Activated T-helper 2 cell treated with anti-CD3 and anti-CD28 coated beads, Interferon-gamma antibody, Interleukin-2, Interleukin-4, amounts not matched to agents 10 μg/mL and 5 μg/mL and 100 μg/mL, durations not matched to agents 14 hours and 24 hours and 36 hours (primary cell): ENCODE measurements at regions of chr1 and their contacts with region 1.

Region 1: DNA sequence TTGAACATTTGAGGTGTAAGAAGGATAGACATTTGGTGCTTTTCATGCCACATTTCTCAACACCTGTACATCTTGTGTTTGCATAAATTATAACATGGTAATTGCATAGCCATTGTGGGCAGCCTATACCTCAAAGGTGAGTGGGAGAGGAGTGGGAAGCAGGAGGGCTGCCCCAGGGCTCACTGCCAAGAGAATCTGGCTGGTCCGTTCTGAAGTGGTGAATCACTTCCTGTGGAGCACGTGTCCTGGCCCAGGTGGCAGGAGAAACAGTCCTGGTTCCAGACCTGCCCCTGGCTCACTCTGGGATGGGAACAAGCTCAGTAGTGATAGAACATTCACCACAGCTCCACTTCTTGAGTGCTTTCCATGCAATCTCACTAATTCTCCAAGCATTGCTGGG is 11.6 kb upstream of the OLFML2B start:
- DNase-seq: no peak
- H3K4me3 Mint-ChIP-seq: no peak overlapping the region
- H3K27ac Mint-ChIP-seq: no peak overlapping the region
- H3K4me1 Mint-ChIP-seq: peaks cover 5% of the 10 kb centered on the region
- H3K27me3 Mint-ChIP-seq: peaks cover 18% of the 10 kb centered on the region

Region 2: DNA sequence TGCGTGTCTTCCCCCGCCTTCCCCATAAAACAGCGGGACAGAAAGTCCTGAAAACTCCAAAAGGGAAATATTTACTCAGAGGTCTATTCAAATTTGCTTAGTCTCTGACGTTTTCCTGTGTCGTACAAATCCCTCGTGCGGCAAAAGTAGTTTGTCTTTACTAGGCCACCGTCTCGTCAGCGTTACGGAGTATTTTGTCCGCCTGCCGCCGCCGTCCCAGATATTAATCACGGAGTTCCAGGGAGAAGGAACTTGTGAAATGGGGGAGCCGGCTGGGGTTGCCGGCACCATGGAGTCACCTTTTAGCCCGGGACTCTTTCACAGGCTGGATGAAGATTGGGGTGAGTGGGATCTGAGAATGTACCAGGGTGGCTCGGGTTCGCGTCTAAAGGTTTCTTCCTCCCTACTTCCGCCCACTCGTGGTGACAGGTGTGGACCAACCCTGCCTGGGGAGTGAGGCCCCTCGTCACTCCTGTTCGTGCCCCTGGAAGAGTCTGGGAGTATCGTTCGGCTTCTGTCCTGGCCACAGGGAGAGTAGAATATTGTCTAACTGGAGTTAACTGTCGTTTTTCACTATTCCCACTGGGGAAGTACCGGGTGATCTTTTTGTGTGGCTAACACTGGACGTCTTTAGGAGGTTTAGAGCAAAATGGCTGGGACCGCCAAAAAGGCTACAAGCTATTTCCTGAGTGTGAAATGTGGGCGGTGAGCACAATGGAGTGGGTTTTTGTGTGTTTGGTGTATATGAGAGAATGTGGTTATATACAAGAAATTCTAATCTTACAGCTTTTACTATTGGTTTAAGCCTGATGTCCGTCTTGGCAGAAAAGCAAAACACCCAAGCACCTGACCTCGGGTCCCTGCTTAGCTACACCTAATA is 268.9 kb before region 1 on chr1 and contains the start of gene ATF6:
- intact Hi-C with region 1: loop called (anchors 10 kb)
- DNase-seq: peak; percentile 77
- H3K4me3 Mint-ChIP-seq: peak within 1 kb of the TSS; percentile 97
- H3K27ac Mint-ChIP-seq: peak within 1 kb of the TSS; percentile 96
- H3K4me1 Mint-ChIP-seq: peaks cover 40% of the 10 kb centered on the region
- H3K27me3 Mint-ChIP-seq: no peaks in the 10 kb centered on the region
- total RNA-seq, gene ATF6: 29.6 and 30.4 TPM in 2 replicates

Region 3: GRCh38 chr1:161989108-161989507 is 46.1 kb before region 1 on chr1:
- intact Hi-C with region 1: no loop called
- DNase-seq: no peak
- H3K4me3 Mint-ChIP-seq: no peak overlapping the region
- H3K27ac Mint-ChIP-seq: no peak overlapping the region
- H3K4me1 Mint-ChIP-seq: no peaks in the 10 kb centered on the region
- H3K27me3 Mint-ChIP-seq: peaks cover 8% of the 10 kb centered on the region

Region 4: GRCh38 chr1:162381383-162381782 is 346.1 kb after region 1 on chr1 and contains the start of gene C1orf226:
- intact Hi-C with region 1: no loop called
- DNase-seq: no peak
- H3K4me3 Mint-ChIP-seq: no peak within 1 kb of the TSS
- H3K27ac Mint-ChIP-seq: no peak within 1 kb of the TSS
- H3K4me1 Mint-ChIP-seq: no peaks in the 10 kb centered on the region
- H3K27me3 Mint-ChIP-seq: peaks cover 2% of the 10 kb centered on the region
- total RNA-seq, gene C1orf226: 0.05 and 0.07 TPM in 2 replicates